GM12878 (cell line): ENCODE measurements at regions of chr11 and their contacts with region 1.

Region 1: DNA sequence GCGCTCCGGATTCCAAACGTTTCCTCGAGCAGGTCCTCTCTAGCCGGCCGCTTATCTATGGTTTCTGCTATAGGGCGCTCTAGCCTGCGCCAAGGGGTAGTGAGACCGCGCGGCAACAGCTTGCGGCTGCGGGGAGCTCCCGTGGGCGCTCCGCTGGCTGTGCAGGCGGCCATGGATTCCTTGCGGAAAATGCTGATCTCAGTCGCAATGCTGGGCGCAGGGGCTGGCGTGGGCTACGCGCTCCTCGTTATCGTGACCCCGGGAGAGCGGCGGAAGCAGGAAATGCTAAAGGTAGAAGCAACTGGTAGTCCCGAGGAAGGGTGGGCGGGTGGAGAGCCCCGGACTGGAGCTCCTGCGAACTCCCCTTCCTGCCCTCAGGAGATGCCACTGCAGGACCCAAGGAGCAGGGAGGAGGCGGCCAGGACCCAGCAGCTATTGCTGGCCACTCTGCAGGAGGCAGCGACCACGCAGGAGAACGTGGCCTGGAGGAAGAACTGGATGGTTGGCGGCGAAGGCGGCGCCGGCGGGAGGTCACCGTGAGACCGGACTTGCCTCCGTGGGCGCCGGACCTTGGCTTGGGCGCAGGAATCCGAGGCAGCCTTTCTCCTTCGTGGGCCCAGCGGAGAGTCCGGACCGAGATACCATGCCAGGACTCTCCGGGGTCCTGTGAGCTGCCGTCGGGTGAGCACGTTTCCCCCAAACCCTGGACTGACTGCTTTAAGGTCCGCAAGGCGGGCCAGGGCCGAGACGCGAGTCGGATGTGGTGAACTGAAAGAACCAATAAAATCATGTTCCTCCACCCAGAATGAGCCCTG is at the starts of genes LBHD1 and UQCC3:
- DNase-seq: no peak
- ATAC-seq: peak; percentile 89
- H3K4me3 ChIP-seq: peak within 1 kb of the TSS; percentile 88
- H3K27ac ChIP-seq: peak within 1 kb of the TSS; percentile 75
- H3K4me1 ChIP-seq: peaks cover 19% of the 10 kb centered on the region
- H3K27me3 ChIP-seq: no peaks in the 10 kb centered on the region
- CTCF ChIP-seq: no peak
- EP300 ChIP-seq: no peak
- POLR2A ChIP-seq: peak; percentile 82
- RAD21 ChIP-seq: no peak
- polyA plus RNA-seq, gene LBHD1: 0.79 to 2.4 TPM
- polyA plus RNA-seq, gene UQCC3: 2.0 to 4.6 TPM

Region 2: GRCh38 chr11:62472012-62472884 is 199.5 kb before region 1 on chr11:
- CTCF ChIA-PET with region 1: no interaction called
- POLR2A ChIA-PET with region 1: no interaction called
- RAD21 ChIA-PET with region 1: no interaction called
- SMC1A ChIA-PET with region 1: no interaction called
- in situ Hi-C with region 1: no loop called
- intact Hi-C with region 1: no loop called
- DNase-seq: no peak
- ATAC-seq: no peak
- H3K4me3 ChIP-seq: no peak overlapping the region
- H3K27ac ChIP-seq: no peak overlapping the region
- H3K4me1 ChIP-seq: no peaks in the 10 kb centered on the region
- H3K27me3 ChIP-seq: no peaks in the 10 kb centered on the region; a peak in 1 of 4 replicates
- CTCF ChIP-seq: no peak
- EP300 ChIP-seq: no peak
- POLR2A ChIP-seq: no peak
- RAD21 ChIP-seq: no peak

Region 3: GRCh38 chr11:62612366-62613290 is 59.2 kb before region 1 on chr11 and contains the starts of genes EML3 and ROM1:
- CTCF ChIA-PET with region 1: no interaction called
- POLR2A ChIA-PET with region 1: interaction called, 9 read pairs
- RAD21 ChIA-PET with region 1: no interaction called
- SMC1A ChIA-PET with region 1: no interaction called
- in situ Hi-C with region 1: no loop called
- intact Hi-C with region 1: loop called (anchors 5 kb)
- DNase-seq: no peak
- ATAC-seq: peak; percentile 88
- H3K4me3 ChIP-seq: peak within 1 kb of the TSS; percentile 94
- H3K27ac ChIP-seq: peak within 1 kb of the TSS; percentile 81
- H3K4me1 ChIP-seq: peaks cover 12% of the 10 kb centered on the region
- H3K27me3 ChIP-seq: no peaks in the 10 kb centered on the region
- CTCF ChIP-seq: peak; percentile 76 to 99 (median 92)
- EP300 ChIP-seq: no peak
- POLR2A ChIP-seq: 0 out of 2 replicates have a peak, but pooled peaks have one; percentile 50
- RAD21 ChIP-seq: peak; percentile 36; the same call in 1 of the 2 replicates
- polyA plus RNA-seq, gene EML3: 0.58 to 1.2 TPM
- polyA plus RNA-seq, gene ROM1: 0.42 TPM